ENCODE measurements at regions of chr11 and their contacts with region 1.

Region 1: DNA sequence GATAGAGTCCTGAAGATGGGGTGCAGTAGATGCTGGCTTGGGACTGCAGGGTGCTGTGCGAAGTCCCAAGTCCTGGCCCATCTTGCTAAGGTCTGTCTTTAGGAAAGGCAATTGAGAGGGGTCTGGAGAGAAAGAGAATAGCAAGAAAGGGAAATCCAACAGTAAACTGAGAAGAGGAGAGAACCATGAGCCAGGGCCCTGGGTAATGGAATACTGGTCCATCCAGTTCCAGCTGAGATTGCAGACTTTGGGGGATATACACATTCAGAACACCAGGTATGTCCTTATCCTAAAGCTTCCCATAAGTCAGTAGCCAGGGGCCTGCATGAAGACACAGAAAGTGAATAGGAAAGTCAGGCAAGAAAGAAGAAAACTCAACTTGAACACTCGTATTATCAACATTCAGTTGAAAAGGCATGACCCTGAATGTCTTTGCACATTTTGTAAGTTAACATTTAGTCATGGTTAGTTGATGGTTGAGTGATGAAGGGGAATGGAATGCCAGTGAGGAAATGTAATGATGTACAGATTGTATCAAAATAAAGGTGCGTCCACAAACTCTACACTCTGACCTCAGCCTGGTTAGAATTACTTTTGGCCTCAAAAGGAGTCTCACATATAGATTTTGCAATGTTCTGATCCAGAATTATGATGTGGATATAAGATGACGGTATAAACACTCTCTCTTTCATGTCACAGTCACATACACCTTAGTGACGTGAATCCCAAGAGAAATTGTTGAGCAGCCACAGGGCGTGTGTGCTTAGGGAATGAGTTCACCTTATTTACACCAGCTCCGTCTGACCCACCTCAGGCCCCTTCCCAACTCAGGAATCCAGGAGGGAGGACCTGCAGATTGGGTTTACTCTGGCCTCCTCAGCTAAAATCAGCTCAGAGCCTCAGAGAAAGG is 100.3 kb downstream of the RDX start:
- DNase-seq: no peak
- H3K4me3 ChIP-seq: no peak overlapping the region
- H3K4me3 Mint-ChIP-seq: no peak overlapping the region
- H3K27ac ChIP-seq: no peak overlapping the region
- H3K27ac Mint-ChIP-seq: no peak overlapping the region
- H3K4me1 ChIP-seq: peaks cover 12% of the 10 kb centered on the region
- H3K4me1 Mint-ChIP-seq: peaks cover 10 to 19% (median 12%) of the 10 kb centered on the region in 4 donors
- H3K27me3 ChIP-seq: no peaks in the 10 kb centered on the region
- H3K27me3 Mint-ChIP-seq: no peaks in the 10 kb centered on the region

Region 2: DNA sequence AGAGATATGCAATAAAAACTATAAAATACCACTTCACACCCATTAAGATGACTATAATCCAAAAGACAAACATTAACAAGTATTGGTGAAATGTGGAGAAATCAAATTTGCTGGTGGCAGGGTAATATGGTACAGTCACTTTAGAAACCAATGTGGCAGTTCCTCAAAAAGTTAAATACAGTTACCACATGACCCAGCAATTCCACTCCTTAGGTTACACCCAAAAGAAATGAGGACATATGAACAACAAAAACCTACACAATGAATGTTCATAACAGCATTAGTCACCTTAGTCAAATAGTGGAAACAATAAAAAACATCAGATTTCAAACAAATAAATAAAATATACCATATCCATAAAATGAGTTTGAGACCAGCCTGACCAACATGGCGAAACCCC is 47.7 kb after region 1 on chr11:
- CTCF ChIA-PET with region 1: interaction called, 77 read pairs
- POLR2A ChIA-PET with region 1: no interaction called
- intact Hi-C with region 1: no loop called
- DNase-seq: no peak
- H3K4me3 ChIP-seq: no peak overlapping the region
- H3K4me3 Mint-ChIP-seq: no peak overlapping the region
- H3K27ac ChIP-seq: no peak overlapping the region
- H3K27ac Mint-ChIP-seq: no peak overlapping the region
- H3K4me1 ChIP-seq: peaks cover 3% of the 10 kb centered on the region
- H3K4me1 Mint-ChIP-seq: peaks cover 4 to 9% (median 5%) of the 10 kb centered on the region in 4 donors
- H3K27me3 ChIP-seq: no peaks in the 10 kb centered on the region
- H3K27me3 Mint-ChIP-seq: no peaks in the 10 kb centered on the region

Region 3: DNA sequence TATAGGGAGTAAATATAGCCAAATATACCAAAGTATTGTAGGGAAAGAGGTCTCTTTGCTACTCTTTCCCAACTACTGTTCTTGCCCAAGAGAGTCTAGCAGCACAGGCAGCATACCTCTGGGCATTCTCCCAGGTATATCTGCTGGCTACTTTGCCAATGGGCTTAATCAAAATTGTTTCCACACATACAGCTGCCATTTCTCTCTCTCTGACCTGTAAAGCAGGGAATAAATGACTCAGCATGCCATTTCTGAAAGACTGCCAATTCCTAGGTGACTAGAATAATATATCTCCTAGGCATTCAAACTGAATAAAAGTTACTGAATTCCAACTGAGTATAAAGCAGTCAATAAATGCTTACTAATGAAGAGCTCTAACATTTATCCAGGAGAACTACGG is 55.7 kb after region 1 on chr11:
- CTCF ChIA-PET with region 1: interaction called, 77 read pairs
- POLR2A ChIA-PET with region 1: no interaction called
- intact Hi-C with region 1: loop called (anchors 1 kb)
- DNase-seq: no peak
- H3K4me3 ChIP-seq: no peak overlapping the region
- H3K4me3 Mint-ChIP-seq: no peak overlapping the region
- H3K27ac ChIP-seq: no peak overlapping the region
- H3K27ac Mint-ChIP-seq: peak overlapping the region in 2 of 7 donors; percentile 22 to 36
- H3K4me1 ChIP-seq: no peaks in the 10 kb centered on the region
- H3K4me1 Mint-ChIP-seq: peaks cover 0 to 2% (median under 1%) of the 10 kb centered on the region in 4 donors
- H3K27me3 ChIP-seq: no peaks in the 10 kb centered on the region
- H3K27me3 Mint-ChIP-seq: no peaks in the 10 kb centered on the region

Region 4: GRCh38 chr11:110296226-110297075 is 100.4 kb after region 1 on chr11 and contains the start of gene RDX:
- CTCF ChIA-PET with region 1: no interaction called
- POLR2A ChIA-PET with region 1: no interaction called
- intact Hi-C with region 1: no loop called
- DNase-seq: peak; percentile 39 to 61 (median 51)
- H3K4me3 ChIP-seq: peak within 1 kb of the TSS; percentile 61 to 62
- H3K4me3 Mint-ChIP-seq: peak within 1 kb of the TSS; percentile 87 to 94 (median 92)
- H3K27ac ChIP-seq: peak within 1 kb of the TSS; percentile 70
- H3K27ac Mint-ChIP-seq: peak within 1 kb of the TSS; percentile 22 to 94 (median 77)
- H3K4me1 ChIP-seq: peaks cover 44% of the 10 kb centered on the region
- H3K4me1 Mint-ChIP-seq: peaks cover 15 to 41% (median 27%) of the 10 kb centered on the region in 4 donors
- H3K27me3 ChIP-seq: no peaks in the 10 kb centered on the region
- H3K27me3 Mint-ChIP-seq: no peaks in the 10 kb centered on the region
- total RNA-seq, gene RDX: 22.4 to 26.5 TPM

Region 5: DNA sequence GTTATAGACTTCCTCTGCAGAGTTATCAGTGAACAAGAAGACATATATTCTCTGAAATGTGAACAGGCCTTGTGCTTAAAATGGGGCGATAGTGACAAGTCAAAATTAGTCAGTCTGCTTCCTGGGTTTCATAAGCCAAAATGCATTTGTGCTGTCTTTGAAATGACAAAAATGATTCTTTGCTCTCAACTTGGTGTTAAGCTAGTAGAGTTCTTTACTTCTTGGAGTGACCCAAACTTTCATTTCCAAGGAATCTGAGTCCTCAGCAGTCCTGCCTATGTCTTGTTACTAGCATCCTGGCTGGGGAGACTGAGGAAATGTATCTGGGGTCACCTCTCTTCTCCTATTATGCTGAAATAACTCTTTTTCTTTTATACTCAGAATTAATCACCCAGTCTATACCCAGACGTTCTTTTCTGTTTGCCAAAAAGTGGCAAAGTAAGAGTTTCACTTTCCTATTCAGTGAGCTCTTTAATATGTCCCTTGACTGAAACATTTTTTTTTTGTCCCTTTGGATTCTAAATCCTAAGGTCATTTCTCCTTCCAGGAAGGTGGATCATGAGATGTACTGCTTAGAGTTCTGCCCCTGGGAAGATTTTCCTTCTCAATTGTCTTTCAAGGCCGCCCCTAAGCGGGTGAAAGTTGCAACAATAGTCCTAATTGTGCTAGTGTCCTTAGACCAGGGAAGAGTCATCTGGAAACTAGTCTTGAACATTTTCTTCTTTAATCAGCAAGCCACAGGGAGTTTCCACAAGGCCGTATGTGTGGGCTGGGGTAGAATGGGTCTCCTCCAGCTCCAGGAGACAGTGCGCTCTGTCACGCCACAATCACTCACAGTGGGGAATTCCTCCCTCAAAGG is 153.3 kb after region 1 on chr11:
- CTCF ChIA-PET with region 1: interaction called, 10 read pairs
- POLR2A ChIA-PET with region 1: no interaction called
- intact Hi-C with region 1: no loop called
- DNase-seq: peak in 1 of 5 donors; percentile 4
- H3K4me3 ChIP-seq: peak overlapping the region in 1 of 2 donors; percentile 5
- H3K4me3 Mint-ChIP-seq: peak overlapping the region; percentile 25 to 85 (median 68)
- H3K27ac ChIP-seq: no peak overlapping the region
- H3K27ac Mint-ChIP-seq: peak overlapping the region; percentile 47 to 85 (median 81)
- H3K4me1 ChIP-seq: peaks cover 42% of the 10 kb centered on the region
- H3K4me1 Mint-ChIP-seq: peaks cover 29 to 44% (median 31%) of the 10 kb centered on the region in 4 donors
- H3K27me3 ChIP-seq: no peaks in the 10 kb centered on the region
- H3K27me3 Mint-ChIP-seq: no peaks in the 10 kb centered on the region

Region 6: GRCh38 chr11:110362971-110363509 is 166.9 kb after region 1 on chr11:
- CTCF ChIA-PET with region 1: interaction called, 147 read pairs
- POLR2A ChIA-PET with region 1: interaction called, 4 read pairs
- intact Hi-C with region 1: loop called (anchors 1 kb)
- DNase-seq: no peak
- H3K4me3 ChIP-seq: no peak overlapping the region
- H3K4me3 Mint-ChIP-seq: peak overlapping the region in 1 of 8 donors; percentile 56
- H3K27ac ChIP-seq: no peak overlapping the region
- H3K27ac Mint-ChIP-seq: peak overlapping the region in 1 of 7 donors; percentile 13
- H3K4me1 ChIP-seq: no peaks in the 10 kb centered on the region
- H3K4me1 Mint-ChIP-seq: no peaks in the 10 kb centered on the region
- H3K27me3 ChIP-seq: no peaks in the 10 kb centered on the region
- H3K27me3 Mint-ChIP-seq: no peaks in the 10 kb centered on the region

Region 7: DNA sequence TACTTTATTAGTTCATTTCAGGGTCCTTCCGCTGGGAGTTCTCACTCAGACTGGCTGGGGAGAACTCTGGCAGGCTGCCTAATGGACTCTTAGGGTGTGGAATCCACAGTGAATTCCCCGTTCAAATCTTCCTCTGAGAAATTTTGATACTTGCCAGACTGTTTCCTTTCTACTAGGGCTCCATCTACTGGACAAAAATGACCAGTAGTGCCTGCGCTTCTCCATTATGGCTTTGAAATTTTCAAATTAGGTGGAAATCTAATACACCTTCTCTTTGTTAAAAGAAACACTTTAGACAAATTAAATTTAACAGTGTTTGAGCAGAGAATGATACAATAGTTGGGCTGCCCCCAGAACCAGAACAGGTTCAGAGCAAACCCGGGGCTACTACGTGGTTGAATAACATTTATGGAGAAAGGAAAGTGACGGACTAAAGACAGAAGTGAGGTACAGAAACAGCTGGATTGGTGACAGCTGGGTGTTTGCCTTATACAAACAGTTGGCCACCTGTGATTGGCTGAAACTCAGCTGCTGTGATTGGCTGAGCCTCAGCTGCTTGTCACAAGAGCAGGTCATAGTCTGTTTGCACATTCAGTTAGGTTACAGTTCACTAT is 180.7 kb after region 1 on chr11:
- CTCF ChIA-PET with region 1: interaction called, 47 read pairs
- POLR2A ChIA-PET with region 1: no interaction called
- intact Hi-C with region 1: loop called (anchors 1 kb)
- DNase-seq: peak in 4 of 5 donors; percentile 30 to 40 (median 38)
- H3K4me3 ChIP-seq: no peak overlapping the region
- H3K4me3 Mint-ChIP-seq: no peak overlapping the region
- H3K27ac ChIP-seq: no peak overlapping the region
- H3K27ac Mint-ChIP-seq: no peak overlapping the region
- H3K4me1 ChIP-seq: peaks cover 11% of the 10 kb centered on the region
- H3K4me1 Mint-ChIP-seq: peaks cover 0 to 6% (median 5%) of the 10 kb centered on the region in 4 donors
- H3K27me3 ChIP-seq: no peaks in the 10 kb centered on the region
- H3K27me3 Mint-ChIP-seq: no peaks in the 10 kb centered on the region

Measured in CD4-positive, alpha-beta memory T cell (primary cell).